Activated CD4-positive, alpha-beta memory T cell treated with anti-CD3 and anti-CD28 coated beads, Interleukin-2, amount 10 ng/mL, durations not matched to agents 7 days and 5 days (primary cell): ENCODE measurements at regions of chr1 and their contacts with region 1.

Region 1: DNA sequence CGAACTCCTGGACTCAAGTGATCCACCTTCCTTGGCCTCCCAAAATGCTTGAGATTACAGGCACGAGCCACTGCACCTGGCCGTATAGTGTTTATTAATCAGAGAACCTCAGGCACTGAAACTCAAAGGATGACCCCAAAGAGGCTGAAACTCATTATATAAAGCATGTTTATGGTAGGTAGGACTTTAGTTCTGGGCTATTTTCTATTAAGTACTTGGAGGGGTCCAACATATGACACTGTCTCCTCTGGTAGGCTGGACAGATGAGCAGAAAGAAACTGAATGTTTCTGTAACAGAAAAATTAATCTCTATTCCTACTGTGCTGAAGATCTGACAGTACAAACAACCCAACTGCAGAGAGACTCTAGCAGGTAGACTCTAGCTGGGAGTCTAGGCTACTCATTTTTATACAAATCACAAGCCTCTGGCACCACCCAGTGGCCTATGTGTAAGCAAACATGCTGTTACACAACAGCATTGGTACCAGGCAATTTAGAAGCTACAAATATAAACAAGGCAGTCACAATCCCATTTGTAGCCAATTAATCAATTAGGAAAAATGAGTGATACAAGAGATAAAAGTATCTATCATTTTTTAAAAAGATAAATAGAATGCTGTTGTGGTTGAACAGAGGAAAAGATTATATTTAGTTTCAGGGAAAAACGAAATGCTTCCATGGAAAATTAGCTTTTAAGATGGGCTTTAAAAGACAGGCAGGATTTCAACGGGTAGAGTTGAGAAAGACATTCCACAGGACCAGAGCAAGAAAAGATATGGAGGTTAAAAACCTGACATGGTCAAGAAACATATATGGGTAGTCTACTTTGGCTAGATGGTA is 10.4 kb downstream of the DCAF8 start:
- DNase-seq: peak; percentile 64
- H3K4me3 Mint-ChIP-seq: no peak overlapping the region
- H3K27ac Mint-ChIP-seq: no peak overlapping the region
- H3K4me1 Mint-ChIP-seq: peaks cover 6% of the 10 kb centered on the region
- H3K27me3 Mint-ChIP-seq: no peaks in the 10 kb centered on the region

Region 2: DNA sequence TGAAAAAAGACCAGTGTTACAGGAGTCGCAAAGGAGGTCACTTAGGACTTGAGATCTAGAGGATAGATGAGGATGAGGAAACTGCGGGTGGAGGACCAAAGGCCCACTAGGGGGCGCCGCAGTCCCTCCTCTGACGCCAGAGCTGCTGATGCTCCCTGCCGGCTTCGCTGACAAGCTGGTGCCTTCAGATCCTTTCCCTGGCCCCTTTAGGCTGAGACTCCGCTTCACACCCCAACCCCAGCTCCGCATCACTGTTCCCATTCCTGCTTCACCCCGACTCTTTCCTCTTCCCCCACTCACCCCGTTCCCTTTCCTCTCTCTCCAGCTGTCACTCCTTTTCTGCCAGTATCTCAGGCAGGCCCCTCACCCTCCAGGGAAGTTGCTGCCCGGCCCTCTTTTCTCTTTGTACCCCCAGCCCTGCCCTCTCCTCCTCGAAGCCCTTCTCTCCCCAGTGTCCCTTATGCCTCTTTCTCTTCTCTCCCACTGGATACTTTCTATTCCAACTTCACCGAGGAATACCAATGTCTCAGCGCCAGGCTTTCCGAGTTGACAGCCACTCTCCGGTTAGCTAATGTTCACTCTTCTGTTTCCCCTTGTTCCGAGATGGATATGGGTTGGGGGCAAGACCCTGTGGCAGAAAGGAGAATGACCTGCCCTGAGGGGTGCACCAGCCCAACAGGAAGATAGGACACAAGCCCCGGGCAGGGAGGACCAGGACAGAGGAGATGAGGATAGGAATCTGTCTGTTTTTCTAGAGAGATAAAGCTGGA is 166.0 kb before region 1 on chr1:
- CTCF ChIA-PET with region 1: interaction called, 34 read pairs
- POLR2A ChIA-PET with region 1: no interaction called
- DNase-seq: peak; percentile 77
- H3K4me3 Mint-ChIP-seq: no peak overlapping the region
- H3K27ac Mint-ChIP-seq: no peak overlapping the region
- H3K4me1 Mint-ChIP-seq: peaks cover 9% of the 10 kb centered on the region
- H3K27me3 Mint-ChIP-seq: peaks cover 27% of the 10 kb centered on the region

Region 3: GRCh38 chr1:160193091-160193819 is 58.7 kb before region 1 on chr1:
- CTCF ChIA-PET with region 1: interaction called, 37 read pairs
- POLR2A ChIA-PET with region 1: interaction called, 3 read pairs
- DNase-seq: peak; percentile 81
- H3K4me3 Mint-ChIP-seq: no peak overlapping the region
- H3K27ac Mint-ChIP-seq: no peak overlapping the region
- H3K4me1 Mint-ChIP-seq: no peaks in the 10 kb centered on the region
- H3K27me3 Mint-ChIP-seq: peaks cover 2% of the 10 kb centered on the region

Region 4: GRCh38 chr1:160267284-160267991 is 15.5 kb after region 1 on chr1:
- CTCF ChIA-PET with region 1: interaction called, 35 read pairs
- POLR2A ChIA-PET with region 1: interaction called, 40 read pairs
- DNase-seq: no peak
- H3K4me3 Mint-ChIP-seq: no peak overlapping the region
- H3K27ac Mint-ChIP-seq: no peak overlapping the region
- H3K4me1 Mint-ChIP-seq: peaks cover 16% of the 10 kb centered on the region
- H3K27me3 Mint-ChIP-seq: no peaks in the 10 kb centered on the region

Region 5: GRCh38 chr1:160376525-160377131 is 124.7 kb after region 1 on chr1:
- CTCF ChIA-PET with region 1: interaction called, 15 read pairs
- POLR2A ChIA-PET with region 1: no interaction called
- DNase-seq: peak; percentile 38
- H3K4me3 Mint-ChIP-seq: no peak overlapping the region
- H3K27ac Mint-ChIP-seq: no peak overlapping the region
- H3K4me1 Mint-ChIP-seq: peaks cover 14% of the 10 kb centered on the region
- H3K27me3 Mint-ChIP-seq: peaks cover 8% of the 10 kb centered on the region